Activated CD8-positive, alpha-beta T cell treated with anti-CD3 and anti-CD28 coated beads for 36 hours (primary cell): ENCODE measurements at regions of chr18 and their contacts with region 1.

Region 1: DNA sequence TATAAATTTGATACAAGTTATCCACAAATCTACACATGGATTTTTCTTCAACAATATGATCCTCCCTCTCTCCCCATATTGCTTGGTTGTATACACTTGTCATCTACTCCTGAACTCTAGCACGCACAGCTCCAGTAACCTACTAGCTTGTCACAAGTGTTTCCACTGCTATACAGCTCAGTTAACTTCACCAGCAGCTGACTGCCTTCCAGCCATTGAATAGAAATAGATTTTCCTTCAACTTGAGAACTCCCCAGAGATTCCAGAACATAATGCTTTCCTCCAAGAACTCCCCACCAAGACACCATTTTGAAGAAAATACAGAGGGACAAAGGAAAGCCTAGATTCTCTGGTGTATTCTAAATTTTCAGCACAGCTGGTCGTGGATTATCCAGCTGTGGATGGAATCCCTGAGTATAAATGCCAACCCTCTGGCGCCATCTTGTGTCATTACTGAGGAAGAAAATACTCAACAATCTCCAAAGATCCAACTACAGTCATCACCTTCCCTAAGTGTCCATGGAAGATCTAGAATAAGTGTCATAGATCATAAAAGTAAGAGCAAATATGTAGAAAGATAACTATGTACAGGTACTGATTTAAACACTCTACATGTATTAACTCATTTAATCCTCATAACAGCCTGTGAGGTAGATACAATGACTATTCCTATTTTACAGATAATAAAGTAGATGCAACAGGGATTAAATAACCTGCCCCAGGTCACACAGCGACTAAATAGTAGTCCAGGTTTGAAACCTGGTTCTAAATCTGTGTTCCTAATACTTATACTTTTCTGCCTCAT is 156.7 kb downstream of the ARHGAP28 start:
- DNase-seq: peak; percentile 14
- ATAC-seq: no peak
- H3K4me3 Mint-ChIP-seq: no peak overlapping the region
- H3K27ac Mint-ChIP-seq: no peak overlapping the region
- H3K4me1 Mint-ChIP-seq: no peaks in the 10 kb centered on the region
- H3K27me3 Mint-ChIP-seq: no peaks in the 10 kb centered on the region
- CTCF ChIP-seq: peak; percentile 60

Region 2: GRCh38 chr18:6543330-6543908 is 342.8 kb before region 1 on chr18:
- CTCF ChIA-PET with region 1: interaction called, 17 read pairs
- POLR2A ChIA-PET with region 1: no interaction called
- intact Hi-C with region 1: loop called (anchors 5 kb)
- DNase-seq: no peak
- ATAC-seq: no peak
- H3K4me3 Mint-ChIP-seq: no peak overlapping the region
- H3K27ac Mint-ChIP-seq: no peak overlapping the region
- H3K4me1 Mint-ChIP-seq: no peaks in the 10 kb centered on the region
- H3K27me3 Mint-ChIP-seq: peaks cover 1% of the 10 kb centered on the region
- CTCF ChIP-seq: peak; percentile 38